Dorsolateral prefrontal cortex (tissue), 120 donors: ENCODE measurements at regions of chr2 and their contacts with region 1.

Region 1: GRCh38 chr2:33583194-33583938 is 15.7 kb downstream of the FAM98A start:
- DNase-seq: peak in 3 of 10 donors; percentile 26 to 65 (median 57)
- H3K4me3 ChIP-seq: no peak overlapping the region
- H3K27ac ChIP-seq: peak overlapping the region in 51 of 59 donors; percentile 4 to 96 (median 61)
- H3K27me3 ChIP-seq: no peaks in the 10 kb centered on the region
- CTCF ChIP-seq: peak; percentile 71 to 98 (median 88)

Region 2: GRCh38 chr2:32553829-32554432 is 1029.4 kb before region 1 on chr2:
- intact Hi-C with region 1: loop called in 1 of 2 experiments (anchors 10 kb)
- DNase-seq: no peak
- H3K4me3 ChIP-seq: no peak overlapping the region
- H3K27ac ChIP-seq: peak overlapping the region in 13 of 59 donors; percentile 5 to 61 (median 33)
- H3K27me3 ChIP-seq: no peaks in the 10 kb centered on the region
- CTCF ChIP-seq: peak; percentile 66 to 96 (median 82)

Region 3: GRCh38 chr2:33047939-33048338 is 535.4 kb before region 1 on chr2:
- intact Hi-C with region 1: loop called in 1 of 2 experiments (anchors 10 kb)
- DNase-seq: no peak
- H3K4me3 ChIP-seq: no peak overlapping the region
- H3K27ac ChIP-seq: no peak overlapping the region
- H3K27me3 ChIP-seq: no peaks in the 10 kb centered on the region
- CTCF ChIP-seq: no peak

Region 4: GRCh38 chr2:33412920-33413319 is 170.4 kb before region 1 on chr2:
- intact Hi-C with region 1: loop called in 1 of 2 experiments (anchors 2 kb)
- DNase-seq: no peak
- H3K4me3 ChIP-seq: no peak overlapping the region
- H3K27ac ChIP-seq: peak overlapping the region in 2 of 59 donors; percentile 13 to 43
- H3K27me3 ChIP-seq: no peaks in the 10 kb centered on the region
- CTCF ChIP-seq: peak in 54 of 56 donors; percentile 23 to 75 (median 51)

Region 5: GRCh38 chr2:33475224-33476130 is 107.9 kb before region 1 on chr2:
- intact Hi-C with region 1: loop called in 1 of 2 experiments (anchors 5 kb)
- DNase-seq: peak; percentile 30 to 87 (median 78)
- H3K4me3 ChIP-seq: peak overlapping the region; percentile 50 to 84 (median 72)
- H3K27ac ChIP-seq: peak overlapping the region; percentile 83 to 99 (median 97)
- H3K27me3 ChIP-seq: no peaks in the 10 kb centered on the region
- CTCF ChIP-seq: peak; percentile 65 to 92 (median 84)